Naive thymus-derived CD4-positive, alpha-beta T cell (primary cell): ENCODE measurements at regions of chr17 and their contacts with region 1.

Region 1: DNA sequence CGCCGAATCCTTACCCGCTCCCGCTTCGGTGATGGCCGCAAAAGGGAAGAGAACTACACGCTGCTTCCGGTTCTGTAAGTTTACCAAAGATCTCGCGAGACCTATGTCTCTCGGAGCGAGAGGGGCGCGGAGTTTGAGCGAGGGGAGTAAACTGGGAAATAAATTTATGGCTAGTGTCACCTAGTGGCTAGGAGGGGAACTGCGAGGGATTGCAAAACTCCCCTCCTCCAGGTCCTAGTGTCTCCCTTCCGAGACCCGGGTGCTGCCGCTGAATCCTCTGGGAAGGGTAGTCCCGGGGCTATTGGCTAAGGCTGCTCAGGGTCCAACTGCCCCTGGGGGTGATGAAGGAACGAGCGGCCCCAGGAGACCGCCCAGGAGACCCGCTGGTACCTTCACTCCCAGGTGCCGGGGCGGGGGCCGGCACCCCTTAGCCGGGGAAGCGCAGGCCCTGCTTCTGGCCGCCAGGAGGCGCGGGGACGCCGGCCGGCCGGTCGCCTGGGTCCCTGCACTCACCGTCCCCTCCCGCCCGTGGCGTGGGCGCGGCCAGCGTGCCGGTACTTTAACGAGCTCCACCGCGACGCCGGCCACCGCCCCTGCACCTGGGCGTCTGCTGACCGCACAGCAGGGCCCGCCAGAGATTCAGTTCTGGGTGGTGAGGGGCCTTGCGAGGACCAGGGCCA is at the start of gene RPL26:
- DNase-seq: peak; percentile 89 to 97 (median 97)
- ATAC-seq: peak; percentile 94
- H3K4me3 ChIP-seq: peak within 1 kb of the TSS; percentile 83
- H3K4me3 Mint-ChIP-seq: peak within 1 kb of the TSS; percentile 93 to 99 (median 97)
- H3K27ac ChIP-seq: peak within 1 kb of the TSS; percentile 82
- H3K27ac Mint-ChIP-seq: peak within 1 kb of the TSS; percentile 93 to 98 (median 96)
- H3K4me1 ChIP-seq: peaks cover 28 to 40% of the 10 kb centered on the region in 2 donors
- H3K4me1 Mint-ChIP-seq: peaks cover 34 to 76% (median 60%) of the 10 kb centered on the region in 7 donors
- H3K27me3 ChIP-seq: no peaks in the 10 kb centered on the region
- H3K27me3 Mint-ChIP-seq: peaks cover 0 to 2% (median 0%) of the 10 kb centered on the region in 5 donors
- total RNA-seq, gene RPL26: 2,029 to 3,298 (median 3,039) TPM

Region 2: DNA sequence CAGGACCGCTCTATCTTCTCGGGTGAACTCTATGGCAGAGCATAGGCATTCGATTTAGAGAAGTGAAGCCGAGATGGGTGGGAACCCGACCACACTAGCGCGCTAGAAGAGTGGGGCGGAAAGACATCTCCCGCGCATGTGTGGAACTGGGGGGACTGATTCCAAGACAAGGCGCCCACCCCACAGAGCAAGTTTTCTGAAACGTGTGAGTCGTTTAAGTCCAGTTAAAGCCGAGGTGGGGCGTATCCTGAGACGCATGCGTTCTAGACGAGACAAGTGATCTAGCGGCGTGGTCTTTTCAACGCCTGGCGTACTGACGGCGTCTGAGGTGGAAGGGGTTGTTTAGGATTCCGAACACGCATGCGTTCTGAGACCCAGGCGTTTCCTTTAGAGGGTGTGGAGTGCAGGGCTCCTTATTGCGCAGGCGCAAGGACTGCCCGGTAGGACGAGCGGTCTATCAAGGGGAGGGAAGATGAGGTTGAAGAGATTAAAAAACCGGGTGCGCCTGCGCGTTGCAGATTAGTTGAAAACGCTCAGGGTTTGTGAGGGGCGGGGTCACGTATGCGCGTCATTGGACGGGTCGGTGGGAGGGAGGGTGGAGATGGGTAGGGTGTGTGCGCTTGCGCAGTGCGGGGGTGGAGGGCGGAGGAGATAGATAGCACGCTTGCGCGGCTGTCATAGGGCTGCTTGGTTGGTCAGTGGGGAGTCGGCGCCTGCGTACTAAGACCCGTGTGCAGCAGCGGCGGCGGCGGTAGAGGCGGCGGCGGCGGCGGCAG is 1076.2 kb before region 1 on chr17 and contains the start of gene EIF5A:
- CTCF ChIA-PET with region 1: no interaction called
- POLR2A ChIA-PET with region 1: no interaction called
- intact Hi-C with region 1: loop called in 1 of 2 experiments (anchors 5 kb)
- DNase-seq: peak; percentile 99 to 100 (median 100)
- ATAC-seq: peak; percentile 79
- H3K4me3 ChIP-seq: peak within 1 kb of the TSS; percentile 78
- H3K4me3 Mint-ChIP-seq: peak within 1 kb of the TSS; percentile 90 to 99 (median 95)
- H3K27ac ChIP-seq: peak within 1 kb of the TSS; percentile 100
- H3K27ac Mint-ChIP-seq: peak within 1 kb of the TSS; percentile 98 to 100 (median 99)
- H3K4me1 ChIP-seq: peaks cover 19 to 20% of the 10 kb centered on the region in 2 donors
- H3K4me1 Mint-ChIP-seq: peaks cover 28 to 44% (median 35%) of the 10 kb centered on the region in 7 donors
- H3K27me3 ChIP-seq: no peaks in the 10 kb centered on the region
- H3K27me3 Mint-ChIP-seq: peaks cover 0 to 9% (median 0%) of the 10 kb centered on the region in 5 donors
- total RNA-seq, gene EIF5A: 237 to 666 (median 453) TPM

Region 3: GRCh38 chr17:7931709-7932482 is 451.4 kb before region 1 on chr17 and contains the starts of genes CNTROB and TRAPPC1:
- CTCF ChIA-PET with region 1: no interaction called
- POLR2A ChIA-PET with region 1: no interaction called
- intact Hi-C with region 1: loop called in 1 of 2 experiments (anchors 5 kb)
- DNase-seq: peak; percentile 97 to 100 (median 99)
- ATAC-seq: peak; percentile 98
- H3K4me3 ChIP-seq: peak within 1 kb of the TSS; percentile 66
- H3K4me3 Mint-ChIP-seq: peak within 1 kb of the TSS; percentile 95 to 100 (median 96)
- H3K27ac ChIP-seq: peak within 1 kb of the TSS; percentile 88
- H3K27ac Mint-ChIP-seq: peak within 1 kb of the TSS; percentile 82 to 99 (median 96)
- H3K4me1 ChIP-seq: peaks cover 20 to 28% of the 10 kb centered on the region in 2 donors
- H3K4me1 Mint-ChIP-seq: peaks cover 31 to 60% (median 54%) of the 10 kb centered on the region in 7 donors
- H3K27me3 ChIP-seq: no peaks in the 10 kb centered on the region
- H3K27me3 Mint-ChIP-seq: no peaks in the 10 kb centered on the region
- total RNA-seq, gene CNTROB: 29.0 to 50.5 (median 33.6) TPM
- total RNA-seq, gene TRAPPC1: 71.4 to 216 (median 103) TPM

Region 4: GRCh38 chr17:8156246-8156992 is 226.9 kb before region 1 on chr17:
- CTCF ChIA-PET with region 1: no interaction called
- POLR2A ChIA-PET with region 1: no interaction called
- intact Hi-C with region 1: loop called in 1 of 2 experiments (anchors 1 kb)
- DNase-seq: peak; percentile 96 to 100 (median 100)
- ATAC-seq: peak; percentile 83
- H3K4me3 ChIP-seq: peak overlapping the region; percentile 93
- H3K4me3 Mint-ChIP-seq: no peak overlapping the region
- H3K27ac ChIP-seq: peak overlapping the region; percentile 97
- H3K27ac Mint-ChIP-seq: no peak overlapping the region
- H3K4me1 ChIP-seq: peaks cover 58 to 75% of the 10 kb centered on the region in 2 donors
- H3K4me1 Mint-ChIP-seq: peaks cover 33 to 73% (median 65%) of the 10 kb centered on the region in 7 donors
- H3K27me3 ChIP-seq: no peaks in the 10 kb centered on the region
- H3K27me3 Mint-ChIP-seq: no peaks in the 10 kb centered on the region

Region 5: DNA sequence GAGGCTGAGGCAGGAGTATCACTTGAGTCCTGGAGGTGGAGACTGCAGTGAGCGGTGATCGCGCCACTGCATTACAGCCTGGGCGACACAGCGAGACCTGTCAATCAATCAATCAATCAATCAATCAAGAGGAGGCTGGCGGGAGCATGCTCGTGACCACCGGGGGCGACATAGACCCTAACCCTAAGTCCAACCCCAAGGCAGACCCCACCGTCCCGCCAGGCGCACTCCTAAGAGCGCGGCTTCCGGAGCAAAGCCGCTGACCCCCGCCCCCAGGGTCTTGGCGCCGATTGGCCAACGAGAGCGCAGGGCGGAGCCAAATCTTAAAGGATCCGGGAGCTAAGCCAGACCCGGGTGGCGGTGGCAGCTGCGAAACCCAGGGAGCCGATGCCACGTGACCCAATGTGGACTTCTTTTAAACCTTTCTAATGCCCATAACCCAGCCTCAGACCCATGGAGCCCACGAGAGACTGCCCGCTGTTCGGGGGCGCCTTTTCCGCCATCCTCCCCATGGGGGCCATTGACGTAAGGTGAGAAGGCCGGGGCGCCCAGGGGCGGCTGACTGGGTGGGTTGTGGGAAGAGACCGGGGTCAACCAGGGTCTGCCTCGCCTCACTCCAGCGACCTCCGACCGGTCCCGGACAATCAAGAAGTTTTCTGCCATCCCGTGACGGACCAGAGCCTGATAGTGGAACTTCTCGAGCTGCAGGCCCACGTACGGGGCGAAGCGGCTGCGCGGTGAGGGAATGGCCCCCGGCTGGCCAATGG is 94.8 kb before region 1 on chr17 and contains the start of gene RANGRF:
- CTCF ChIA-PET with region 1: no interaction called
- POLR2A ChIA-PET with region 1: no interaction called
- intact Hi-C with region 1: loop called in 1 of 2 experiments (anchors 2 kb)
- DNase-seq: peak; percentile 64 to 86 (median 74)
- ATAC-seq: peak; percentile 95
- H3K4me3 ChIP-seq: peak within 1 kb of the TSS; percentile 95
- H3K4me3 Mint-ChIP-seq: peak within 1 kb of the TSS; percentile 92 to 100 (median 97)
- H3K27ac ChIP-seq: peak within 1 kb of the TSS; percentile 96
- H3K27ac Mint-ChIP-seq: peak within 1 kb of the TSS; percentile 89 to 98 (median 96)
- H3K4me1 ChIP-seq: peaks cover 8 to 24% of the 10 kb centered on the region in 2 donors
- H3K4me1 Mint-ChIP-seq: peaks cover 27 to 46% (median 43%) of the 10 kb centered on the region in 7 donors
- H3K27me3 ChIP-seq: no peaks in the 10 kb centered on the region
- H3K27me3 Mint-ChIP-seq: no peaks in the 10 kb centered on the region
- total RNA-seq, gene RANGRF: 26.0 to 46.1 (median 38.9) TPM

Region 6: GRCh38 chr17:8630802-8631553 is 247.7 kb after region 1 on chr17:
- CTCF ChIA-PET with region 1: no interaction called
- POLR2A ChIA-PET with region 1: no interaction called
- intact Hi-C with region 1: loop called in 1 of 2 experiments (anchors 2 kb)
- DNase-seq: peak; percentile 63 to 91 (median 82)
- ATAC-seq: peak; percentile 97
- H3K4me3 ChIP-seq: peak overlapping the region; percentile 64
- H3K4me3 Mint-ChIP-seq: peak overlapping the region; percentile 91 to 100 (median 99)
- H3K27ac ChIP-seq: peak overlapping the region; percentile 66
- H3K27ac Mint-ChIP-seq: peak overlapping the region in 7 of 9 donors; percentile 35 to 95 (median 80)
- H3K4me1 ChIP-seq: peaks cover 5% of the 10 kb centered on the region in 2 donors
- H3K4me1 Mint-ChIP-seq: peaks cover 0 to 18% (median 13%) of the 10 kb centered on the region in 7 donors
- H3K27me3 ChIP-seq: peaks cover 3 to 4% of the 10 kb centered on the region in 2 donors
- H3K27me3 Mint-ChIP-seq: peaks cover 30 to 67% (median 51%) of the 10 kb centered on the region in 5 donors

Region 7: GRCh38 chr17:8954339-8954738 is 571.1 kb after region 1 on chr17:
- CTCF ChIA-PET with region 1: no interaction called
- POLR2A ChIA-PET with region 1: no interaction called
- intact Hi-C with region 1: no loop called
- DNase-seq: peak; percentile 52 to 93 (median 83)
- ATAC-seq: peak; percentile 95
- H3K4me3 ChIP-seq: peak overlapping the region; percentile 33
- H3K4me3 Mint-ChIP-seq: peak overlapping the region; percentile 76 to 94 (median 86)
- H3K27ac ChIP-seq: peak overlapping the region; percentile 70
- H3K27ac Mint-ChIP-seq: peak overlapping the region; percentile 84 to 98 (median 96)
- H3K4me1 ChIP-seq: peaks cover 81 to 99% of the 10 kb centered on the region in 2 donors
- H3K4me1 Mint-ChIP-seq: peaks cover 78 to 100% (median 98%) of the 10 kb centered on the region in 7 donors
- H3K27me3 ChIP-seq: no peaks in the 10 kb centered on the region
- H3K27me3 Mint-ChIP-seq: no peaks in the 10 kb centered on the region

Region 8: DNA sequence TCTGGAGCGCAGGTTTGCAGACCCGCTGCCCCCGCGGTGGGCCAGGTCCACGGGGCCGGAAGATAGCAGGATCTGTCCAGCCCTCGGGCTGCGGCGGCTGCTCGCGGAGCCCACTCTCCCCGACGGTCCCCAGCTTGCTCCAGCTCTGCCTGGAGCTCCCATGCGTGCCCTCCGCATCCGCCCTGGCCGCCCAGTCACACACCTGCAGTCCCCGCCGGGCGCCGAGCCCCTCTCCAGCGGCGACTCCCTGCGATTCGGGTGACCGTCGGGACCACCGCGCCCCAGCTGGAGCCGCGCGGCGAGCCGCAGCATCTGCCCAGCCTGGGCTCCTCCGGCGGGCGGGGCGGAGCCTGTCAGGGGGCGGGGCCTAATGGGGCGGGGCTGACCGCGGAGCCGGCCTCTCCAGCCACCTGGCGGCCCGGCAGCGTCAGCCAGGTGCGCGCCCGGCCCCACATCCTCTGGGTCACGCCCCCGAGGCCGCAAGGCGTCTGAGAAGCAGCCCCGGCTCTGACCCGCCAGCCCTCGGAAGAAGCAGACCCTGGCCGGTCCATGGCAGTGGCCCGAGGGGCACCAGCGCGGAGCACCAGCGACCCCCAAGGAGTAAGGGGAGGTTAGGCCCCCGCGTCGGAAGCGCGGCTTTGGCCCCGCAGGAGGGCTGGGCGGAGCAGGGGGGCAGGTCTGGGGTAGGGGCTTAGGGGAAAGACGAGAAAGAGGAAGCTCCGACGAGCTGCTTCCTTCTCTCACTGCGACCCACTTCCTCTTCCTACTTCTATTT is 582.3 kb after region 1 on chr17 and contains the start of gene PIK3R5:
- CTCF ChIA-PET with region 1: no interaction called
- POLR2A ChIA-PET with region 1: no interaction called
- intact Hi-C with region 1: loop called in 1 of 2 experiments (anchors 10 kb)
- DNase-seq: peak; percentile 71 to 82 (median 78)
- ATAC-seq: peak; percentile 89
- H3K4me3 ChIP-seq: peak within 1 kb of the TSS; percentile 81
- H3K4me3 Mint-ChIP-seq: peak within 1 kb of the TSS; percentile 86 to 100 (median 98)
- H3K27ac ChIP-seq: peak within 1 kb of the TSS; percentile 84
- H3K27ac Mint-ChIP-seq: peak within 1 kb of the TSS; percentile 80 to 98 (median 94)
- H3K4me1 ChIP-seq: peaks cover 34 to 35% of the 10 kb centered on the region in 2 donors
- H3K4me1 Mint-ChIP-seq: peaks cover 31 to 56% (median 46%) of the 10 kb centered on the region in 7 donors
- H3K27me3 ChIP-seq: no peaks in the 10 kb centered on the region
- H3K27me3 Mint-ChIP-seq: no peaks in the 10 kb centered on the region
- total RNA-seq, gene PIK3R5: 73.5 to 231 (median 77.6) TPM